Tibial artery (tissue), 4 donors: ENCODE measurements at regions of chr3 and their contacts with region 1.

Region 1: DNA sequence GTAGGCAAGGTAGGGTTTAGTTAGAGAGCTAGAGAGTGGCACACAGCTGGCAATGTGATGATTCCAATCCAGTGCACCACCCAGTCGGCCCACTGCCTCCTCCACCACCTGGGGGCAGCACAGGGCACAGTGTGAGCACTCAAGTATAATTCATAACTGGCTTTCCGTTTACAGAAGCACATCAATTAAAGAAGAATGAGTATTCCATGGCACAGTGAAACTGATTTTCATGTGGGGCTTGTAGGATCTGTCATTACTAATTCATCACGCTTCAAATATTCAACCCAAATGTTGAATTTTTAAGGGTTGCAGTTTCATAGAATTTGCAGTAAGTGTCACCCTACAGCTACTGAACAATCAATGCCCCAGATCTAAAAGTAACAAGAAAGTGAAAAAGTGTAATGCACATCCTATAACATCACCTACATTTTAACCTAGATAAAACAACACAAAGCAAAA is 149.9 kb downstream of the IGSF11 start:
- DNase-seq: peak; percentile 68 to 70
- H3K4me3 ChIP-seq: no peak overlapping the region
- H3K27ac ChIP-seq: no peak overlapping the region
- H3K4me1 ChIP-seq: no peaks in the 10 kb centered on the region
- H3K27me3 ChIP-seq: peaks cover 0 to 18% of the 10 kb centered on the region in 2 donors
- CTCF ChIP-seq: peak; percentile 62 to 73

Region 2: DNA sequence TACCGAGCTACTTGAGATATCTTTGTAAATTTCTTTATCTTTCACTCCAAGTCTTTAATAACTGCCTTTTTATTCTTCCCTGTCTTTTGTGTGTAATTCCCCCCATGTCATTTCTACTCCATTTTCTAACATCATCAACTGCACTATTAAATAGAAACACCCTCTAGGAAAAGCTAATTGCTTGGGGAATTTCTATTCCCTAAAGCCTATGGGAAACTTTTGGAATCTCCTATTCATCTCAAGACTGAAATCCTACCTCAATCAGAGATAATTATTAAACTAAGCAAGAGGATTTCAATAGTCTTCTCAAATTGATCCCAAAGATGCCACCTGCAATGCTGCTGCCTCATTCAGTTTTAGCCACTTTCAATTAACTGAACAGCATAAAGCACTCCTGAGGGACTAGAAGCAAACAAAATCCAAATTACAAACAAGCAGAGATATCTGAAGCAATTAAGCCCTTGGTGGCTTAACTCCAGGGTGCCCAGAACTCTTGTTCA is 448.9 kb before region 1 on chr3:
- intact Hi-C with region 1: no loop called
- DNase-seq: no peak
- H3K4me3 ChIP-seq: no peak overlapping the region
- H3K27ac ChIP-seq: no peak overlapping the region
- H3K4me1 ChIP-seq: no peaks in the 10 kb centered on the region
- H3K27me3 ChIP-seq: no peaks in the 10 kb centered on the region
- CTCF ChIP-seq: no peak

Region 3: DNA sequence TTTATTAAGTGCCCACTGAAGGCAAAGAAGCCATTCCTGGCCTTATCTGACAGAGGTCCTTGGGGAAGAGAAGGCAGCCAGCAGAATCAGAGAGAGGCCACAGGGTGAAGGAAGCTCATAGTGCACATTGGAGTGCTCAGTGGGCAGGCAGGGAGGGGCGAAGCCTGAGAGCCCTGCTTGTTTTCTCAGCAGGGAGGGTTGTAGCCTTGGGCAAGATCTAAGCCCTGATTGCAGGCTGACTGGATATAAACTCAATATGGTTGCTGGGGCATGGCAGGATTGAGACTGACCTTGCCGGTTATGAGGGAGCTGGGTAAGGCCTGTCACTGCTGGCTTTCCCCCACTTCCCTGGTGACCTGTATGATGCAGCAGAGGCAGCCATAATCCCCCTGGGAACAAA is 157.4 kb after region 1 on chr3:
- intact Hi-C with region 1: no loop called
- DNase-seq: no peak
- H3K4me3 ChIP-seq: no peak overlapping the region
- H3K27ac ChIP-seq: no peak overlapping the region
- H3K4me1 ChIP-seq: no peaks in the 10 kb centered on the region
- H3K27me3 ChIP-seq: peaks cover 0 to 3% of the 10 kb centered on the region in 2 donors
- CTCF ChIP-seq: no peak

Region 4: GRCh38 chr3:119098619-119099222 is 213.9 kb after region 1 on chr3:
- intact Hi-C with region 1: loop called (anchors 10 kb)
- DNase-seq: no peak
- H3K4me3 ChIP-seq: no peak overlapping the region
- H3K27ac ChIP-seq: no peak overlapping the region
- H3K4me1 ChIP-seq: no peaks in the 10 kb centered on the region
- H3K27me3 ChIP-seq: no peaks in the 10 kb centered on the region
- CTCF ChIP-seq: peak; percentile 48 to 54